PC-3 (cell line): ENCODE measurements at regions of chr17 and their contacts with region 1.

Region 1: GRCh38 chr17:7045909-7046724 is 2.2 kb upstream of the SLC16A11 start:
- DNase-seq: peak; percentile 86
- ATAC-seq: peak; percentile 53
- H3K4me3 ChIP-seq: peak overlapping the region; percentile 64
- H3K27ac ChIP-seq: peak overlapping the region; percentile 94
- H3K4me1 ChIP-seq: peaks cover 33% of the 10 kb centered on the region
- H3K27me3 ChIP-seq: no peaks in the 10 kb centered on the region
- CTCF ChIP-seq: peak; percentile 87

Region 2: GRCh38 chr17:7001318-7001961 is 44.7 kb before region 1 on chr17:
- CTCF ChIA-PET with region 1: no interaction called
- POLR2A ChIA-PET with region 1: no interaction called
- intact Hi-C with region 1: no loop called
- DNase-seq: no peak
- ATAC-seq: no peak
- H3K4me3 ChIP-seq: no peak overlapping the region
- H3K27ac ChIP-seq: no peak overlapping the region
- H3K4me1 ChIP-seq: no peaks in the 10 kb centered on the region
- H3K27me3 ChIP-seq: no peaks in the 10 kb centered on the region
- CTCF ChIP-seq: peak; percentile 32; the same call in 1 of the 2 replicates

Region 3: DNA sequence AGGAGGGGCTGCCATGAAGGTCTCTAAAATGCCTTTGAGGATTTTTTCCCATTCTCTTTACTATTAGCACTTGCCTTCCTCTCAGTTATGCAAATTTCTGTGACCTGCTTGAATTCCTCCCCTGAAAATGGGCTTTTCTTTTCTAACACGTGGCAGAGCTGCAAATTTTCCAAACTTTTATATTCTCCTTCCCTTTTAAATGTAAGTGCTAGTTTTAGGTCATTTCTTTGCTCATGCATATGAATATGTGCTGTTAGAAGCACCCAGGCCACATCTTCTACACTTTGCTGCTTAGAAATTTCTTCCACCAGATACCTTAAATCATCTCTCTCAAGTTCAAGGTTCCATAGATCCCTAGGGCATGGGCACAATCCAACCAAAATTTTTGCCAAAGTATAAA is 22.2 kb after region 1 on chr17:
- CTCF ChIA-PET with region 1: no interaction called
- POLR2A ChIA-PET with region 1: no interaction called
- intact Hi-C with region 1: no loop called
- DNase-seq: no peak
- ATAC-seq: no peak
- H3K4me3 ChIP-seq: no peak overlapping the region
- H3K27ac ChIP-seq: no peak overlapping the region
- H3K4me1 ChIP-seq: peaks cover 4% of the 10 kb centered on the region; the same call in 1 of the 2 replicates
- H3K27me3 ChIP-seq: no peaks in the 10 kb centered on the region
- CTCF ChIP-seq: no peak

Region 4: DNA sequence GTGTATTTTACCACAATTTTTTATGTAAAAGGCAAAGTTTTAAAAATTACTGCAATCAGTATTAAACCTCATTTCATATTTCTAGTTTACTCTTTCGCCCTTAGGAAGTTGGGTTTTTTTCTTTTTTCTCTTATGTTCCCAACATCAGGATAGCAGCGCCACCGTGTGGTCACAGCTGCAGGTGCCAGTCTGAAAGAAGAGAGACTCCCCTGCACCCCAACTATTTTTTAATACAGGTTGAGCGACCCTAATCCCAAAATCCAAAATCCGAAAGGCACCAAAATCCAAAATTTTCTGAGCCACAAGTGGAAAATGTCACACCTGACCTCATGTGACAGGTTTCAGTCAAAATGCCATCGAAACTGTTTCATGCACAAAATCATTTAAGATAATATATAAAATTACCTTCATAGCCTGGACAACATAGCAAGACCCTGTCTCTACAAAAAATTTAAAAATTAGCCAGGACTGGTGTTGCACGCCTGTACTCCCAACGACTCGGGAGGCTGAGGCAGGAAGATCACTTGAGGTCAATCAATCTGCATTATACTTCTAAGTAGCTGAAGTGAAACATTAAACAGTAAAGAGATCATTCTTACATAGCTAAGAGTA is 90.3 kb after region 1 on chr17:
- CTCF ChIA-PET with region 1: interaction called, 6 read pairs
- POLR2A ChIA-PET with region 1: no interaction called
- intact Hi-C with region 1: loop called (anchors 1 kb)
- DNase-seq: peak; percentile 76
- ATAC-seq: peak; percentile 48; the same call in 1 of the 2 replicates
- H3K4me3 ChIP-seq: peak overlapping the region; percentile 61
- H3K27ac ChIP-seq: no peak overlapping the region
- H3K4me1 ChIP-seq: peaks cover 12% of the 10 kb centered on the region; the same call in 1 of the 2 replicates
- H3K27me3 ChIP-seq: no peaks in the 10 kb centered on the region
- CTCF ChIP-seq: peak; percentile 90

Region 5: DNA sequence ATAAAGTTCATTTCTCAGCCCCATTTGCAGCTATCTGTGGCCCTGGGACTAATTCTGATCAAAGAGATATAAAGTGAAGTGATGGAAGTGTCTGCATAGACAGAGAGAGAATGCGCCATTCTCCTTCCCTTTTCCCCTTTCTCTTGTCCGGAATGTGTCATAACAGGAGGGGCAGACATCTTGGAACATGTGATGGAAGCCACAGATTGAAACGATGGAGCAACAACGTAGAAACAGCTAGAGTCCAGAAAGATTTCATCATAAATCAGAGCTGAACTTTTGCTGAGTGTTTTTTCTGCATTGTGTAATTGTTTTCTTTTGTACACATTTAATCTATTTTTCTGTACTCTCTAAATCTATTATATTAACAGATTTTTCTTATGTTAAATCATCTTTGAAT is 121.7 kb after region 1 on chr17:
- CTCF ChIA-PET with region 1: interaction called, 11 read pairs
- POLR2A ChIA-PET with region 1: no interaction called
- intact Hi-C with region 1: no loop called
- DNase-seq: no peak
- ATAC-seq: no peak
- H3K4me3 ChIP-seq: no peak overlapping the region
- H3K27ac ChIP-seq: no peak overlapping the region
- H3K4me1 ChIP-seq: no peaks in the 10 kb centered on the region; the same call in 1 of the 2 replicates
- H3K27me3 ChIP-seq: no peaks in the 10 kb centered on the region
- CTCF ChIP-seq: no peak

Region 6: GRCh38 chr17:7177196-7177953 is 131.3 kb after region 1 on chr17:
- CTCF ChIA-PET with region 1: interaction called, 11 read pairs
- POLR2A ChIA-PET with region 1: interaction called, 3 read pairs
- intact Hi-C with region 1: loop called (anchors 2 kb)
- DNase-seq: peak; percentile 66
- ATAC-seq: peak; percentile 83
- H3K4me3 ChIP-seq: peak overlapping the region; percentile 77
- H3K27ac ChIP-seq: no peak overlapping the region
- H3K4me1 ChIP-seq: no peaks in the 10 kb centered on the region
- H3K27me3 ChIP-seq: no peaks in the 10 kb centered on the region
- CTCF ChIP-seq: peak; percentile 78

Region 7: DNA sequence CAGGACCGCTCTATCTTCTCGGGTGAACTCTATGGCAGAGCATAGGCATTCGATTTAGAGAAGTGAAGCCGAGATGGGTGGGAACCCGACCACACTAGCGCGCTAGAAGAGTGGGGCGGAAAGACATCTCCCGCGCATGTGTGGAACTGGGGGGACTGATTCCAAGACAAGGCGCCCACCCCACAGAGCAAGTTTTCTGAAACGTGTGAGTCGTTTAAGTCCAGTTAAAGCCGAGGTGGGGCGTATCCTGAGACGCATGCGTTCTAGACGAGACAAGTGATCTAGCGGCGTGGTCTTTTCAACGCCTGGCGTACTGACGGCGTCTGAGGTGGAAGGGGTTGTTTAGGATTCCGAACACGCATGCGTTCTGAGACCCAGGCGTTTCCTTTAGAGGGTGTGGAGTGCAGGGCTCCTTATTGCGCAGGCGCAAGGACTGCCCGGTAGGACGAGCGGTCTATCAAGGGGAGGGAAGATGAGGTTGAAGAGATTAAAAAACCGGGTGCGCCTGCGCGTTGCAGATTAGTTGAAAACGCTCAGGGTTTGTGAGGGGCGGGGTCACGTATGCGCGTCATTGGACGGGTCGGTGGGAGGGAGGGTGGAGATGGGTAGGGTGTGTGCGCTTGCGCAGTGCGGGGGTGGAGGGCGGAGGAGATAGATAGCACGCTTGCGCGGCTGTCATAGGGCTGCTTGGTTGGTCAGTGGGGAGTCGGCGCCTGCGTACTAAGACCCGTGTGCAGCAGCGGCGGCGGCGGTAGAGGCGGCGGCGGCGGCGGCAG is 261.0 kb after region 1 on chr17 and contains the start of gene EIF5A:
- CTCF ChIA-PET with region 1: no interaction called
- POLR2A ChIA-PET with region 1: no interaction called
- intact Hi-C with region 1: loop called (anchors 5 kb)
- DNase-seq: peak; percentile 99
- ATAC-seq: peak; percentile 75
- H3K4me3 ChIP-seq: peak within 1 kb of the TSS; percentile 85
- H3K27ac ChIP-seq: peak within 1 kb of the TSS; percentile 97
- H3K4me1 ChIP-seq: peaks cover 23% of the 10 kb centered on the region; the same call in 1 of the 2 replicates
- H3K27me3 ChIP-seq: no peaks in the 10 kb centered on the region
- CTCF ChIP-seq: no peak
- total RNA-seq, gene EIF5A: 1,140 and 1,203 TPM in 2 replicates

Region 8: DNA sequence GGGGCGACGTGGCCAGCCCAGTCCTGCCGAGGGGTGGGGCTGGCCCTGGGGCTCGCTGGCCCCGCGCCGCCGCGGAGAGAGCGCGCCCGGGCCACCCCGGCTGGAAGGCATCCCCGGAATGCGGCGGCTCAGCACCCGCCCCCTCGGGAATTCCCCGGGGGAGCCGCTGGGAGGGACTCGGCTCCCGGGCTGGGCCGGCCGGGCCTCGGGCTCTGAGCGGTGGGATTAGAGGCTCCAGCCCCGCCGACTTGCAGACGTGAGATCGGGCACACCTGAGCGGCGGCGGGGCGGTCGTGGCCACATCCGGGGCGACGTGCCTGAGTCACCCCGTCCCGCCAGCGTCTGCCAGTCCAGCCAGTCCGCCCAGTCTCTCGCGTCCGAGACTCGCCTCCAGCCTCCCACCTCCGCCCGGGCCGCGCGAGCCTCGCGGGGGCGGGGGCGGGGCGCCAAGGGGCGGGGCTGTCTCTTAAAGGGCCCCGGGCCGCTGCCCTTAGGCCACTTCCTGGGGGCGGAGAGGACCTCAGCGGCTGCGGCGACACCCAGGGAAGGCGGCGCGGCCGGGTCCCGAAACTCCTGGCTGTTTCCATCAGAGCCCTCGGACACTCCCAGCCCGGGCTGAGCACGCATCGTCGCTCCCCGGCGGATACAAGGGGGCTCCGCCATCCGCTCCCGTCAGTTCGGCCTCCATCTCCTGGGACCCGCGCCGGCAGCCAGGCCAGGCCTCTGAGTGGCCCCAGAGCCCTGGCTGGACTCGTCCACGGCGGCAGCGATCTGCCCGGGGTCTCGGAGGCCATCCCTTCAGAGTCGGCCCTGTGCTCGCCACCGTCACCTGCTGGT is 305.8 kb after region 1 on chr17 and contains the start of gene KCTD11:
- CTCF ChIA-PET with region 1: no interaction called
- POLR2A ChIA-PET with region 1: no interaction called
- intact Hi-C with region 1: loop called (anchors 5 kb)
- DNase-seq: peak; percentile 92
- ATAC-seq: peak; percentile 79
- H3K4me3 ChIP-seq: peak within 1 kb of the TSS; percentile 87
- H3K27ac ChIP-seq: peak within 1 kb of the TSS; percentile 95
- H3K4me1 ChIP-seq: peaks cover 28% of the 10 kb centered on the region
- H3K27me3 ChIP-seq: no peaks in the 10 kb centered on the region
- CTCF ChIP-seq: no peak; the same call in 1 of the 2 replicates
- total RNA-seq, gene KCTD11: 7.0 and 7.6 TPM in 2 replicates